ENCODE measurements at regions of chr7 and their contacts with region 1.

Region 1: DNA sequence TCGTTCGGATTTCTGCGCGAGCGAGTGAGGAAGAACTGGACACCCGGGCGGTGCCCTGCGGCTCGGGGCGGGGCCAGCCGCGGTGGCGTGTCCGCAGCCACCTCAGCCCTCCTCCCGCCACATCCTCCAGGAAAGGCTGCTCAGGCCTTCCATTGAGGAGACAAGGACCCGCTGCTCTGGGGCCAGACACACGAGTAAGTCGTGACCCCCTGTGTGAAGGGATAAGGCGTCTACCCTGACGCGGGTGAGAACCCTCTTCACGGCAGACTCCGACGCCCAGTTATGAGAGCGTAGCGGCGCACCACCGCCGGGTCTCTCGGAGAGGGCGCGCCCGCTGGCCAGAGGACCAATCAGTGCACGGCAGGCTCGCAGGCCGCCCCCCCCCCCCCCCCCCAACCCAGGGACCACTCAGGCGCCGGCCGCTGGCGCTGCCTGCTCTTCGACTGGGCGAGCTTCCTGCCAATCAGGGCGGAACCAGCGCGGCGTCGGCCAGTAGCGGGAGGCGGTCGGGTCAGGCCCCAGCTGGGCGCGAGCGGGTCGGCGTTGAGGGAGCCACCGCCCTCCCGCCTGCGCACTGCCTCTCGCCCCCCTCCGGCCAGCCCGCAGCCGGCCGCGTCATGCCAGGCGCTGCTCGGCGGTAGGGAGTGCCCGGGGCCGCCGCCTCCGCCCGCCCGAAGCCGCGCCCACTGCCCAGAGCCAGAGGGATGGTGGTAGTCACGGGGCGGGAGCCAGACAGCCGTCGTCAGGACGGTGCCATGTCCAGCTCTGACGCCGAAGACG is at the start of gene KCTD7:
- H3K4me3 ChIP-seq: peak within 1 kb of the TSS; percentile 68
- H3K27ac ChIP-seq: peak within 1 kb of the TSS; percentile 63
- H3K4me1 ChIP-seq: 0 out of 2 replicates have a peak, but pooled peaks cover 2% of the 10 kb centered on the region
- CTCF ChIP-seq: no peak

Region 2: GRCh38 chr7:66654123-66654732 is 25.7 kb after region 1 on chr7:
- CTCF ChIA-PET with region 1: interaction called, 3 read pairs
- POLR2A ChIA-PET with region 1: interaction called, 17 read pairs
- H3K4me3 ChIP-seq: peak overlapping the region; percentile 60
- H3K27ac ChIP-seq: peak overlapping the region; percentile 93
- H3K4me1 ChIP-seq: no peaks in the 10 kb centered on the region
- CTCF ChIP-seq: no peak

Region 3: GRCh38 chr7:67928141-67928540 is 1299.6 kb after region 1 on chr7:
- CTCF ChIA-PET with region 1: no interaction called
- POLR2A ChIA-PET with region 1: no interaction called
- H3K4me3 ChIP-seq: no peak overlapping the region
- H3K27ac ChIP-seq: no peak overlapping the region
- H3K4me1 ChIP-seq: no peaks in the 10 kb centered on the region
- CTCF ChIP-seq: no peak